ENCODE measurements at regions of chr1 and their contacts with region 1.

Region 1: GRCh38 chr1:31548907-31549808 is 27.2 kb upstream of the TINAGL1 start:
- DNase-seq: peak; percentile 77 to 93 (median 84)
- ATAC-seq: peak; percentile 100
- H3K4me3 ChIP-seq: peak overlapping the region in 1 of 2 experiments; percentile 12
- H3K4me3 Mint-ChIP-seq: peak overlapping the region; percentile 30
- H3K27ac ChIP-seq: no peak overlapping the region
- H3K27ac Mint-ChIP-seq: no peak overlapping the region
- H3K4me1 ChIP-seq: peaks cover 4% of the 10 kb centered on the region
- H3K4me1 Mint-ChIP-seq: peaks cover 10% of the 10 kb centered on the region
- H3K27me3 ChIP-seq: peaks cover 0 to 2% of the 10 kb centered on the region in 2 experiments
- H3K27me3 Mint-ChIP-seq: peaks cover 9% of the 10 kb centered on the region
- CTCF ChIP-seq: peak; percentile 91

Region 2: GRCh38 chr1:31182352-31182751 is 366.8 kb before region 1 on chr1:
- CTCF ChIA-PET with region 1: interaction called, 3 read pairs
- POLR2A ChIA-PET with region 1: interaction called, 4 read pairs
- intact Hi-C with region 1: loop called (anchors 5 kb)
- DNase-seq: peak; percentile 9 to 69 (median 45)
- ATAC-seq: peak; percentile 56
- H3K4me3 ChIP-seq: no peak overlapping the region
- H3K4me3 Mint-ChIP-seq: peak overlapping the region; percentile 15
- H3K27ac ChIP-seq: no peak overlapping the region
- H3K27ac Mint-ChIP-seq: no peak overlapping the region
- H3K4me1 ChIP-seq: peaks cover 7% of the 10 kb centered on the region
- H3K4me1 Mint-ChIP-seq: peaks cover 8% of the 10 kb centered on the region
- H3K27me3 ChIP-seq: peaks cover 11 to 14% of the 10 kb centered on the region in 2 experiments
- H3K27me3 Mint-ChIP-seq: peaks cover 57% of the 10 kb centered on the region
- CTCF ChIP-seq: no peak

Region 3: GRCh38 chr1:31394628-31395193 is 154.4 kb before region 1 on chr1:
- CTCF ChIA-PET with region 1: interaction called, 38 read pairs
- POLR2A ChIA-PET with region 1: no interaction called
- intact Hi-C with region 1: loop called (anchors 1 kb)
- DNase-seq: peak; percentile 58 to 86 (median 78)
- ATAC-seq: peak; percentile 94
- H3K4me3 ChIP-seq: peak overlapping the region; percentile 64 to 78
- H3K4me3 Mint-ChIP-seq: peak overlapping the region; percentile 86
- H3K27ac ChIP-seq: no peak overlapping the region
- H3K27ac Mint-ChIP-seq: no peak overlapping the region
- H3K4me1 ChIP-seq: peaks cover 8% of the 10 kb centered on the region
- H3K4me1 Mint-ChIP-seq: peaks cover 12% of the 10 kb centered on the region
- H3K27me3 ChIP-seq: no peaks in the 10 kb centered on the region
- H3K27me3 Mint-ChIP-seq: no peaks in the 10 kb centered on the region
- CTCF ChIP-seq: peak; percentile 70